Common myeloid progenitor, CD34-positive (primary cell): ENCODE measurements at regions of chr11 and their contacts with region 1.

Region 1: GRCh38 chr11:61899146-61899841 is 7.9 kb upstream of the FADS3 start:
- DNase-seq: peak; percentile 87 to 94 (median 92)
- H3K4me3 ChIP-seq: no peak overlapping the region
- H3K27ac ChIP-seq: no peak overlapping the region
- H3K4me1 ChIP-seq: peaks cover 0 to 7% (median 2%) of the 10 kb centered on the region in 4 experiments
- H3K27me3 ChIP-seq: peaks cover 0 to 2% (median 0%) of the 10 kb centered on the region in 5 experiments

Region 2: GRCh38 chr11:61256710-61257482 is 642.4 kb before region 1 on chr11:
- CTCF ChIA-PET with region 1: no interaction called
- POLR2A ChIA-PET with region 1: no interaction called
- DNase-seq: peak; percentile 51 to 90 (median 88)
- H3K4me3 ChIP-seq: no peak overlapping the region
- H3K27ac ChIP-seq: no peak overlapping the region
- H3K4me1 ChIP-seq: peaks cover 0 to 2% (median 0%) of the 10 kb centered on the region in 4 experiments
- H3K27me3 ChIP-seq: no peaks in the 10 kb centered on the region

Region 3: DNA sequence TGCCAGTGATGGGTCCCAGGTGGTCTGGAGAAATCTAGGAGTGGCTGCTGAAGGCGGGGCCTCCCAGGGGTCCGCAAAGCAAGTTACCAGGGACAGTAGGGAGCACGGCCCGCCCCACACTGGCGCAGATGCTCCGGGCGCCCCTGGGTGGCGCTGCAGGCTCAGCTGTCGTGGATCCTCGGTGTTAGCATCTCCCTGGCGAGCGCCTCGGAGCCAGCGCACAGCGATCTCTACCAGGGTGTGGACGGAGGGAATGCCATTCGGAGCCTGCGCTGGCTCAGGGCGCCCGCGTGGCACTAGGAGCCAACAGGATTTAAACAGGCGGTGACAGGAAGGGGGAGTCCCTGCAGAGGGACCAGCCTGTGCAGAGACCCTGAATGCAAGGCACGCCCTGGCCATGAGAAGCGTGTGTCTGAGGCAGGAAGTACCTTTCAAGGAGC is 28.1 kb before region 1 on chr11:
- CTCF ChIA-PET with region 1: interaction called, 344 read pairs
- POLR2A ChIA-PET with region 1: no interaction called
- DNase-seq: peak; percentile 65 to 76 (median 76)
- H3K4me3 ChIP-seq: peak overlapping the region in 4 of 7 experiments; percentile 26 to 72 (median 47)
- H3K27ac ChIP-seq: no peak overlapping the region
- H3K4me1 ChIP-seq: peaks cover 0 to 14% (median 6%) of the 10 kb centered on the region in 4 experiments
- H3K27me3 ChIP-seq: peaks cover 0 to 2% (median 0%) of the 10 kb centered on the region in 5 experiments

Region 4: DNA sequence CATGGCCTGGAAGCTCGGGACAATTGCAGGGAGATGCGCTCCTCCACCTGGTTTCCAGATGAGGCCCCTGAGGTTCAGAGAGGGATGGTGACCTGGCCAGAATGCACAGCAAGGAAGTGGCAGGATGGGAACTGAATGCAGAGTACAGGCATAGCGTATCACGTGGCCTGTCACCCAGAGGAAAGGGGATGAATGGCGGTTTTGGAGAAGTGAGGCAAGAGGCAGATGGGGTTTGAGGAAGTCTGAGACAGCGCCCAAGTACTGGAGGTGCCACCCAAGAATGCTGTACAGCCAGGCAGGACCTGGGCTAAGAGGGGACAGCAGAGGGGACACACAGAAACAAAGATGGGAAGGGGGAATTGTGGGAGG is 13.2 kb after region 1 on chr11:
- CTCF ChIA-PET with region 1: interaction called, 39 read pairs
- POLR2A ChIA-PET with region 1: no interaction called
- DNase-seq: peak; percentile 18 to 75 (median 70)
- H3K4me3 ChIP-seq: no peak overlapping the region
- H3K27ac ChIP-seq: no peak overlapping the region
- H3K4me1 ChIP-seq: peaks cover 0 to 52% (median 26%) of the 10 kb centered on the region in 4 experiments
- H3K27me3 ChIP-seq: peaks cover 0 to 28% (median 3%) of the 10 kb centered on the region in 5 experiments

Region 5: DNA sequence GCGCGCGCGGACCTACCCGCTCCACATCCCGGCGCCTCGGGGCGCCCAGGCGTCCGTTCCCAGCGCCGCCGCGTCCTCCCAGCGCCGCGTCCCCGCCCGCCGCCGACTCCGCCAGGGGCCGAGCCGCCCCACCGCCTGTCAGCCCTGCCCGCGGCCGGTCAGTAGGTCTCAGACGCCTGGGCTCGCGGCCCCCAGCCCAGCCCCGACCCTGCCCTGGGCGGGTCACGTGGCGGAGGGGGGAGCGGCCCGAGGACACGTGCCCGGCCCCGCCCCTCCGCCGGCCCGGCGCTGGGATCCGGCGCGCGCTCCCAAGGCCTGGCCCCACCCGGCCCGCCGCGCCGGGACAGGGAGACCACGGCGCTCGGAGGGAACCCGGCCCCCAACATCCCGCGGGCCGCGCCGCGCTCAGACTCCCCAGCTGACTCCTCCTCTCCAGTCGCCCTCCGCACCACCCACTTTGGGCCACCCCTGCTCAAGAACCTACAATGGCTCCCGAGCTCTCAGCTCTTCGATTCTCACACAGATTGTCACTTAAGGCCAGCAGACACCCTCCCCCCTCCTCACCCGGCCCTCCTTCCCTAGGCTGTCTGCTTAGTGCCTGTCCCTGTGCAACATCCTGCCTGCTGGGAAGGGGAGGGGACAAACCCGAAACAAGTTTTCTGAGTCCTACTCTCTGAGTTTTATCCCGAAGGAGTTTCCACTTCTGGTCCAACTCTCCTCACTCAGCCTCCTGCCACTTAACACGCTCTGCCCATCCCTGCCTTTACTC is 18.2 kb after region 1 on chr11 and contains the start of gene RAB3IL1:
- CTCF ChIA-PET with region 1: interaction called, 14 read pairs
- POLR2A ChIA-PET with region 1: no interaction called
- DNase-seq: peak in 1 of 3 donors; percentile 29
- H3K4me3 ChIP-seq: peak within 1 kb of the TSS; percentile 3 to 66 (median 56)
- H3K27ac ChIP-seq: no peak within 1 kb of the TSS
- H3K4me1 ChIP-seq: peaks cover 0 to 40% (median 17%) of the 10 kb centered on the region in 4 experiments
- H3K27me3 ChIP-seq: peaks cover 0 to 52% (median 10%) of the 10 kb centered on the region in 5 experiments

Region 6: GRCh38 chr11:61923166-61924063 is 24.1 kb after region 1 on chr11:
- CTCF ChIA-PET with region 1: interaction called, 24 read pairs
- POLR2A ChIA-PET with region 1: no interaction called
- DNase-seq: peak in 2 of 3 donors; percentile 43 to 69
- H3K4me3 ChIP-seq: no peak overlapping the region
- H3K27ac ChIP-seq: no peak overlapping the region
- H3K4me1 ChIP-seq: peaks cover 0 to 21% (median 6%) of the 10 kb centered on the region in 4 experiments
- H3K27me3 ChIP-seq: peaks cover 0 to 15% (median 0%) of the 10 kb centered on the region in 5 experiments

Region 7: DNA sequence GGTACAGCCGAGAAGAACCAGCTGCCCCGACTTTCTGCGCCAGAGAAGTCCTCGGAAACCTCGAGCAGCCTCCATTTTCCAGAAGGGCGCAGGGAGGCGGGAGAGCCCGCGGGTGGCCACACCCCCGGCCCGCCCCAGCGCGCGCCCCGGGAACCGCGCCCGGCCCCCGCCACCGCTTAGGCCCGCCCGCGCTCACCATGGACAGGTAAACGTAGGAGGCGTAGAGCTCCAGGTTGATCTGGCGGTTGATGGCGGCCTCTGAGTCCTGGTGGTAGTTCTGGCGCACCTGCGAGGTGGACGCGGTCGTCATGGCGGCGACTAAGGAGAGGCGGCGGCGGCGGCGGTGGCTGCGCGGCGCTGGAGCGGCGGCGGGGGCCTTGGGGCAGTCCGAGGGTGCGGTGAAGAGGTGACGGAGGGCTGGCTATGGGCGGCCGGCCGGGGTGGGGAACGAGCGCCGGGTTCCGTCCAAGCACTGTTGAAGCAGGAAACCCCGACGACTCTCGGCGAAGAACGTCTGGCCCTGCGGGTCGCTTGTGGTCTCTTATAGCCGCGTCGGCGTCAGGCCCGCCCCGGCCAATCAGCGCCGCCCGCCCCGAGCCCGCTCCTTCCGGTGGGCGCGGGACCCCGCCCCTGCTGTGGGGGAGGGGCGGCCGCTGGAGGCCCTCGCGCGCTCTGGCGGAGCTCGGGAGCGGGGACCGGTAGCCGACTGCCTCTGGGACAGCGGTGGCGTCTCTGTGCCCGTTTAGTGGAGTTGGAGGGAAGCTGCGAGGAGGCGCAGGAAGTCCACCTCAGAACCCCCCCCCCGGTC is 68.0 kb after region 1 on chr11 and contains the start of gene FTH1:
- CTCF ChIA-PET with region 1: interaction called, 49 read pairs
- POLR2A ChIA-PET with region 1: no interaction called
- DNase-seq: peak; percentile 90 to 95 (median 95)
- H3K4me3 ChIP-seq: peak within 1 kb of the TSS; percentile 64 to 100 (median 97)
- H3K27ac ChIP-seq: peak within 1 kb of the TSS; percentile 86 to 93
- H3K4me1 ChIP-seq: peaks cover 45 to 89% (median 78%) of the 10 kb centered on the region in 4 experiments
- H3K27me3 ChIP-seq: no peaks in the 10 kb centered on the region

Region 8: GRCh38 chr11:62033191-62034044 is 134.1 kb after region 1 on chr11:
- CTCF ChIA-PET with region 1: no interaction called
- POLR2A ChIA-PET with region 1: no interaction called
- DNase-seq: peak in 2 of 3 donors; percentile 42 to 64
- H3K4me3 ChIP-seq: no peak overlapping the region
- H3K27ac ChIP-seq: no peak overlapping the region
- H3K4me1 ChIP-seq: peaks cover 0 to 6% (median under 1%) of the 10 kb centered on the region in 4 experiments
- H3K27me3 ChIP-seq: no peaks in the 10 kb centered on the region